Esophagus squamous epithelium (tissue), 5 donors: ENCODE measurements at regions of chr6 and their contacts with region 1.

Region 1: DNA sequence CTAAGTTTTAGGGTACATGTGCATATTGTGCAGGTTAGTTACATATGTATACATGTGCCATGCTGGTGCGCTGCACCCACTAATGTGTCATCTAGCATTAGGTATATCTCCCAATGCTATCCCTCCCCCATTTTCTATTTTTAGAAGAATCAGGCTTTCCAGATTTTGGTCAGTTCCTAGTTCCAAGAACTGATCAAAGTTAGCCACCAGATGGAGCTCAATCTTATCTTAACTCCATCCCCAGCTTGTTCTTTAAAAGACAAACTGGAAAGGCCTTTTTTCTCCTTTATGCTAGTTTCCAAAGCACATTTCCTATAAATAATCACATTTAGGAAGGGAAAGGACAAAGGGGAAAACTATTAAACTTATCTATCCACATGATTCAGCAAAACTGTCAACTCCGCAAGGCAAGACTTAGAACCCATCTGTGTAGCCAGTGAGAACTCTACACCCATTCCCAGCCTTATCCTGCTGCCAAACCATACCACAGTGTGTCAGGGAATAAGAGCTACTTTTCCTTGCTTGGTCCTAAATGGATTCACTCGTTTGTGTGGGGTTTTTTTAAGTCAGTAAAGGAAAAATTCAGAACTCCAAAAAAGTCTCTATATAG is 22.8 kb upstream of the KHDC1 start:
- DNase-seq: no peak
- H3K4me3 ChIP-seq: no peak overlapping the region
- H3K27ac ChIP-seq: no peak overlapping the region
- H3K4me1 ChIP-seq: no peaks in the 10 kb centered on the region
- H3K27me3 ChIP-seq: no peaks in the 10 kb centered on the region
- CTCF ChIP-seq: peak in 3 of 6 experiments; percentile 20 to 46 (median 27)
- POLR2A ChIP-seq: no peak

Region 2: GRCh38 chr6:72461144-72461543 is 824.6 kb before region 1 on chr6:
- intact Hi-C with region 1: no loop called
- DNase-seq: no peak
- H3K4me3 ChIP-seq: no peak overlapping the region
- H3K27ac ChIP-seq: no peak overlapping the region
- H3K4me1 ChIP-seq: no peaks in the 10 kb centered on the region
- H3K27me3 ChIP-seq: no peaks in the 10 kb centered on the region
- CTCF ChIP-seq: no peak
- POLR2A ChIP-seq: no peak

Region 3: DNA sequence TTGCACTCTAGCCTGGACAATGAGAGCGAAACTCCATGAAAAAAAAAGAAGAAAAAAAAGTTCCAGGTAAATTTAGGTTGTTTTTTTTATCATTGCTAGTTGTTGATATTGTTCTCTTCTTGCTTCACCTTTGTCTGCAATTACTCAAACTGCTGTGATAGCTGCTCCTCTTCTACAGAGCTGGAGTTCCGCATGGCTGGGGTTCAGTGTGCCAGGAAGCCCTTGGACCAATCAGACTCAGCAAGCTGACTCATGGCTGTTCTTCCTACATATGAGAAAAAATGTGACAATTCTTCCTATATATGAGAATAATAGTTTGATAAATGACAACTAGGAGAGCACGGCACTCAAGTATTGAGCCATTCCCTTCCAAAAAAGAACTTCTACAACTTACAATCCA is 39.9 kb after region 1 on chr6:
- intact Hi-C with region 1: loop called (anchors 2 kb)
- DNase-seq: no peak
- H3K4me3 ChIP-seq: no peak overlapping the region
- H3K27ac ChIP-seq: no peak overlapping the region
- H3K4me1 ChIP-seq: no peaks in the 10 kb centered on the region
- H3K27me3 ChIP-seq: peaks cover 0 to 35% (median 0%) of the 10 kb centered on the region in 4 donors
- CTCF ChIP-seq: no peak
- POLR2A ChIP-seq: no peak